ENCODE measurements at regions of chr17 and their contacts with region 1.

Region 1: GRCh38 chr17:29219378-29220047 is 27.1 kb upstream of the CRYBA1 start:
- DNase-seq: no peak
- H3K4me3 ChIP-seq: no peak overlapping the region
- H3K27me3 ChIP-seq: no peaks in the 10 kb centered on the region
- CTCF ChIP-seq: peak; percentile 97

Region 2: DNA sequence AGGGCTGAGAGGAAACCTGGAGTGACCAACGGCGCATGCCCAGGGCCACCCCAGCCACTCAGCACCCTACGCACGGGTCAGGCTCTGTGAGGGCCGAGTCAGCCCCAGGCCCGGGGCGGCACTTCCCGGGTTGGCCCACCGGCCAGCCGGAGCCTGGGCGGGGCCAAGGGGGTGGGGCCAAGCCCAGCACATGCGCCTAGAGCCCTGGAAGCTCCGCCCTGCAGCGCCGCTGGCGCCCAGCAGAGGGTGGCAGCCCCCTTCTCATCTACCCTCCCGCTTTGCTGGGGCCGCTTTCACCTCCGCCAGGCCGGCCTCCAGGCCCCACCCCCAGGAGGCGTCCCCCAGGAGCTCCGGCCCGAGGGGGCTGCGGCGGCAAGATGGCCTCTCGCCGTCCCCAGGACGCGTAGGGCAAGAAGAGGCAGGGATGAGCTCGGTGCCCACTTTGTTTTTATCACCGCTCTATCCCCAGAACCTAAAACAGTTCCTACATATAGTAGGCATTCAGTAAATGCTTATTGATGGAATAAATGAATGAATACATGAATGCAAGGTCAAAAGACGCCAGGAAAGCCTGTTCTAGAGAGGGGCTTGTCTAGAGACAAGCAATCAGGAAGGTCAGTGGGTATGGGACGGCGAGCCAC is 70.6 kb before region 1 on chr17:
- CTCF ChIA-PET with region 1: interaction called, 238 read pairs
- POLR2A ChIA-PET with region 1: no interaction called
- DNase-seq: no peak
- H3K4me3 ChIP-seq: peak overlapping the region; percentile 36
- H3K27me3 ChIP-seq: no peaks in the 10 kb centered on the region
- CTCF ChIP-seq: peak; percentile 89

Region 3: DNA sequence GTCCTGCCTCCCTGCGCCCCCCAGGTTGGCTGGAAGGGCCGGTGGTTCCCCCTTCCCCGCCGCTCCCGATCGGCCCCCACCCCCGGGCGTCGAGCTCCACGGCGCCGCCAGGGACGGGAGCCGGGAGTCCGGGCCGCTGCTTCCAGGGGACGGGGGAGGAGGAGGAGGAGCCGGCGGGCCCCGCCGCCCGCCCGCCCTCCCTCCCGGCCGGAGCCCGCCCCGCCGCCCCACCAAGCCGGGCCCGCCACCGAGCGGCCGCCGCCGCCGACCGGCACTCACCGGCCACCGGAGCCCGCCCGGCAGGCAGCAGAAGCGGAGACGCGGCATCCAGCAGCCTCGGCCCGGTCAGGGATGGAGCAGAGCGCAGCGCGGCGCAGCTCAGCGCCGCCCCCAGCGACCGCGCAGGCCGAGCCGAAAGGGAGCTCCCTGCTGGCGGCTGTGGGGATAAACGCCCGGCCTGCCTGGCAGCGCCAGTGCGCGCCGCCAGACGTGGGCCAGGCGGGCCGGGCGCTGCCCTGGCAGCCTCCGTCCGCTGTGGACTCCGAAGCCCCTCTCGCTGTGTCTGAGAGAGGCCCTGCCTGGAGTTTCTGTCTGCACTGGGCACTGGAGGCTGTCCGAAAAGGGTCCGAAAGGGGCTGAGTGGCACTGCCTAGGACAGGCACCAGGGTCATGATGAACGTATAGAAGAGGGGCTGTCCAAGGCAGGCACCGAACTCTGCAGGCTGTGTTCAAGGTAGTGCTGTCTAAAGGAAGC is 39.3 kb before region 1 on chr17 and contains the start of gene MYO18A:
- CTCF ChIA-PET with region 1: interaction called, 54 read pairs
- POLR2A ChIA-PET with region 1: no interaction called
- DNase-seq: no peak
- H3K4me3 ChIP-seq: peak within 1 kb of the TSS; percentile 60
- H3K27me3 ChIP-seq: no peaks in the 10 kb centered on the region
- CTCF ChIP-seq: peak; percentile 57
- polyA plus RNA-seq, gene MYO18A: 8.2 and 12.0 TPM in 2 replicates

Region 4: DNA sequence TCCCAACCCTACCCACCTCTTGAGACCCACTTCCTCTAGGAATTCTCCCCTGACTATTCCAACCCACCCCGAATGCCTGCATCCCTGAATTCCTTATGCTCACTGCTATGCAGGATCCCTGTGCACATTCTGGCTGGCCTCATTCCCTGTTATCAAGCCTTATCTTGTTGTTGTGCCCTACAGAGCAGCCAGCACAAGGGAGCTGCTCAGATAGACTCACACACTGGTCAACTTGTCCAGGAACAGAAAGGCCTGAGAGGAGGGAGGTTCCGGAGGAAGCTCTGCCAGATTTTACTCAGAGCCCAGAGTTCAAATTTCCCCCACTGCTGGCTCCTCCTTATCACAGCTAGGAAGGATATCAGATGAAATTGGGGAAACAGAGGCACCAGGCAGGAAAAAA is 14.5 kb before region 1 on chr17:
- CTCF ChIA-PET with region 1: interaction called, 24 read pairs
- POLR2A ChIA-PET with region 1: no interaction called
- DNase-seq: no peak
- H3K4me3 ChIP-seq: no peak overlapping the region
- H3K27me3 ChIP-seq: no peaks in the 10 kb centered on the region
- CTCF ChIP-seq: no peak

Region 5: DNA sequence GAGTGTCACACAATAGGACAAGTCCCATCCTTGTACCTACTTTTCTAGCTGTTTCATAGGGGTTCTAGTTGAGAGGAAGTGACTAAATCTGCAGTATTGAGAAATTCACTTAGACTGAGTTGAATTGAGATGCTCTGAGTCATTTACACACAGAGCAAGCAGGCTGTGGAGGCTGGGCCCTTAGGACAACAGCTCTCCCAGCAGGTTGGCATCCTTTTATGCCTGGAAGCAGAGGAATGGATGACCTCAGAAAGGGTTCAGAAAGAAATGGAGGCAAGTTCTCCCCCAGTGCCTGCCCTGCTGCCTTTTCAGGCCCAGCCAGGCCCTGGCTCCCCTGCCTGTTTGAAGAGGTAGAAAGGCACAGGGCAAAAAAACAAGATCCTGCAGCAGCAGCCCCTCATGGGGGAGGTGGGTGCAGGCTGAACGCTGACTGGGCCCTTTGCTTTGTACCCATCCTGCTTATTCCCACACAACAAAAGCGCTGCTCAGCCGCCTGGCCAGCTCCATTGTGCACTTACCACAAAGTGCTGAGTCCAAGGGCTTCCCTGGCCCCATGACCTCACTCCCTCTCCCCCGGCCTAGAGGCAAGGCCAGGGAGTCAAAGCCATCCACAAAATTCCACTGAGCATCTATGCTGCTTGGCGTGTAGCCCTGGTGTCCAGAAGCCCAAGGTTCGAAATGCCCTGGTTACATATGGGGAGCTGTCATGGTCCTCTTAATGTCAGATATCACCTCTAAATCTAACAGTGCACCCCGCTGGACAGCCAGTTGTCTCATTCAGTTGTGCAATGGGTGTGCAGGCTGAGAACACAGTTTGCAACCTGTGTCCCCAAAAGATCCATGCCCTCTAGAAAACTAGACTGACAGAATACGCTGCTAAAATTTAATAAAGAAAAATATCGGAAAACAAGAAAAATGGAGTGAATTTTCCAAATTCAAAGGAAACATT is 21.8 kb after region 1 on chr17:
- CTCF ChIA-PET with region 1: interaction called, 23 read pairs
- POLR2A ChIA-PET with region 1: no interaction called
- DNase-seq: peak; percentile 90
- H3K4me3 ChIP-seq: no peak overlapping the region
- H3K27me3 ChIP-seq: no peaks in the 10 kb centered on the region
- CTCF ChIP-seq: peak; percentile 24; the same call in 1 of the 2 replicates

Region 6: GRCh38 chr17:29283271-29283895 is 63.9 kb after region 1 on chr17:
- CTCF ChIA-PET with region 1: interaction called, 11 read pairs
- POLR2A ChIA-PET with region 1: no interaction called
- DNase-seq: no peak
- H3K4me3 ChIP-seq: no peak overlapping the region
- H3K27me3 ChIP-seq: no peaks in the 10 kb centered on the region
- CTCF ChIP-seq: peak; percentile 35